PC-3 (cell line): ENCODE measurements at regions of chr7 and their contacts with region 1.

Region 1: DNA sequence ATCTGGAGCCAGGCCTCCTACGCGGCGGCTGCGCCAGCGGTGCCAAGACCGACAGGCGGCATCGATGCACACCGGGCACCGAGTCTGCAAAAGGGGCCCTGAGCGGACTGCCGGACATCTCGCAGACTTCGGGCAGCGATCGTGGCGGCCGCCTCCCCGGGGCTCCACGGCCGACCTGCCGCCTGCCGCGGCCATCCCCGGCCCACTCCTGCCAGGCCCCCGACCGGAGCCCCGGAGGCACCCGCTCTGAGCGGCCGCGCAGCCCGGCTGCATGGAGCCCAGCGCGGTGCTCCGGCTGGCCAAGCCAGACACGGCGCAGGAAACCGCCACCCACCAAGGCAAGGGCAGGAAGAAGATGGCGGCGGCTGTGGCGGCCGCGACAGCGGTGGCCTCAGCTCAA is 154.2 kb upstream of the KCTD7 start:
- DNase-seq: no peak
- ATAC-seq: no peak
- H3K4me3 ChIP-seq: no peak overlapping the region
- H3K27ac ChIP-seq: no peak overlapping the region
- H3K4me1 ChIP-seq: no peaks in the 10 kb centered on the region
- H3K27me3 ChIP-seq: no peaks in the 10 kb centered on the region
- CTCF ChIP-seq: no peak

Region 2: DNA sequence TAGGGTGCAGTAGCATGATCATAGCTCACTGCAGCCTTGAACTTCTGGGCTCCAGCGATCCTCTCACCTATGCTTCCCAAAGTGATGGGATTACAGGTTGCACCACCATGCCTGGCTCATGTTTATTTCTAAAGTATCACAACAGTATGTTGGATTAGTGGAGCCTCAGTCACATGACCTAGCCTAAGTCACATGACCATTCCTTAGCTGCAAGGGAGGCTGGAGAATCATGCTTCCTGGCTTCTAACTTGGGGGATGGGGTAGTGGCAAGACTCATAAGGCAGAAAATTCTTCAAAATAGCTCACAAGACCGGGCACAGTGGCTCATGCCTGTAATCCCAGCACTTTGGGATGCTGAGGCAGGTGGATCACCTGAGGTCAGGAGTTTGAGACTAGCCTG is 296.2 kb before region 1 on chr7:
- CTCF ChIA-PET with region 1: interaction called, 10 read pairs
- POLR2A ChIA-PET with region 1: no interaction called
- intact Hi-C with region 1: no loop called
- DNase-seq: no peak
- ATAC-seq: no peak
- H3K4me3 ChIP-seq: no peak overlapping the region
- H3K27ac ChIP-seq: no peak overlapping the region
- H3K4me1 ChIP-seq: no peaks in the 10 kb centered on the region
- H3K27me3 ChIP-seq: no peaks in the 10 kb centered on the region
- CTCF ChIP-seq: no peak

Region 3: DNA sequence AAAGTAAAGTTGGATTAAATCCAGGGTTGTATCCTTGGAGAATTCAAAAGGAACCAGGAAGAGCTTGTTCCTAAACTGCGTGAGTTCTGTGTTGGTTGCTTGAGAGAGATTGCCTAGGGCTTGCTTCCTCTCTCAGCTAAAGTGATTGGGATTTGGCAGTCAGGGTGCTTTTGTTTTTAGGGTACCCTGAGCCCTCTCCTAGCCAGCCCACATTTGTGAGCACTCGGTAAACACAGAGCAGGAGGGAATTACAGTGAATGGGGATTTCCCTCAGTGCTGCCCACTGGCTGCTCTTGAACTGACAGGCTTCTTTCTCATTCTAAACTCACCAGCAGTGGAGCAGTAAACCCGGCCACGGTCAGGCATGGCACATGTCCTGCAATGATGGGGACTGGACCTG is 122.4 kb before region 1 on chr7:
- CTCF ChIA-PET with region 1: no interaction called
- POLR2A ChIA-PET with region 1: no interaction called
- intact Hi-C with region 1: no loop called
- DNase-seq: no peak
- ATAC-seq: peak; percentile 27; the same call in 1 of the 2 replicates
- H3K4me3 ChIP-seq: no peak overlapping the region
- H3K27ac ChIP-seq: no peak overlapping the region
- H3K4me1 ChIP-seq: no peaks in the 10 kb centered on the region
- H3K27me3 ChIP-seq: no peaks in the 10 kb centered on the region
- CTCF ChIP-seq: no peak

Region 4: DNA sequence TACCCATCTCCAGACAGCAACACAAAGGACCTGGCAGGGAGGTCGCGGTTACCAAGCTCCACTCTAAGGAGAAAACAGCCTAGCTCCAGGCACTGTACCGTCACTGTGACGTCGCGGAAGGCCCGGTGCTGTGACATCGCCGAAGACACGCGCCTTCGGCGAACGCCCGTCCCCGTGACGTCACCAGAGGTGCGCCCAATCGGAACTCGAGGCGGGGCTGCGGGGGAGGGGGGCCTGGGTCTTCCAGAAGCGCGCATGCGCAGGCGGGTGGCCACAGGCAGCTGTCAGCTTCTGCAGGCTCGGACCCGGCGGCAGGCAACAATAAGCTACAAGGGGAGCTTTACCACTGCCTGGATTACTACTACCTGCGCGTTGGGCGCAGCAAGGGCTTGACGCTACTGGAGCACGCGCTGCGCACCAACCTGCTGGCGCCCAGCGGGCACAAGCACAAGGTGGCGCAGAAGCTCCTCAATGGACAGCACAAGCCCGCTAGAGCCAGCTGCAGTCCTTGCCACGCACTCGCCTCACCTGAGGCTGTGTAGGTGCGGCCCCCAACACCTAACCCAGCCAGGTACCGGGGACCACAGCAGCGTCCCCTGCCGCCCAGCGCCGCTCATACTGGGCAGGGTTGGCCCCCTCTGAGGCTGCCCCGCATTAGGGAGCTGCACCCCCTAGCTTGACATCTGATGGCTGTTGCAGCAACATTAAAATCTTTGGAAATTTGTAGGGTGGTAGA is 60.9 kb before region 1 on chr7:
- CTCF ChIA-PET with region 1: no interaction called
- POLR2A ChIA-PET with region 1: no interaction called
- intact Hi-C with region 1: no loop called
- DNase-seq: peak; percentile 67
- ATAC-seq: peak; percentile 92
- H3K4me3 ChIP-seq: peak overlapping the region; percentile 64
- H3K27ac ChIP-seq: no peak overlapping the region
- H3K4me1 ChIP-seq: 0 out of 2 replicates have a peak, but pooled peaks cover 4% of the 10 kb centered on the region
- H3K27me3 ChIP-seq: no peaks in the 10 kb centered on the region
- CTCF ChIP-seq: peak; percentile 57

Region 5: DNA sequence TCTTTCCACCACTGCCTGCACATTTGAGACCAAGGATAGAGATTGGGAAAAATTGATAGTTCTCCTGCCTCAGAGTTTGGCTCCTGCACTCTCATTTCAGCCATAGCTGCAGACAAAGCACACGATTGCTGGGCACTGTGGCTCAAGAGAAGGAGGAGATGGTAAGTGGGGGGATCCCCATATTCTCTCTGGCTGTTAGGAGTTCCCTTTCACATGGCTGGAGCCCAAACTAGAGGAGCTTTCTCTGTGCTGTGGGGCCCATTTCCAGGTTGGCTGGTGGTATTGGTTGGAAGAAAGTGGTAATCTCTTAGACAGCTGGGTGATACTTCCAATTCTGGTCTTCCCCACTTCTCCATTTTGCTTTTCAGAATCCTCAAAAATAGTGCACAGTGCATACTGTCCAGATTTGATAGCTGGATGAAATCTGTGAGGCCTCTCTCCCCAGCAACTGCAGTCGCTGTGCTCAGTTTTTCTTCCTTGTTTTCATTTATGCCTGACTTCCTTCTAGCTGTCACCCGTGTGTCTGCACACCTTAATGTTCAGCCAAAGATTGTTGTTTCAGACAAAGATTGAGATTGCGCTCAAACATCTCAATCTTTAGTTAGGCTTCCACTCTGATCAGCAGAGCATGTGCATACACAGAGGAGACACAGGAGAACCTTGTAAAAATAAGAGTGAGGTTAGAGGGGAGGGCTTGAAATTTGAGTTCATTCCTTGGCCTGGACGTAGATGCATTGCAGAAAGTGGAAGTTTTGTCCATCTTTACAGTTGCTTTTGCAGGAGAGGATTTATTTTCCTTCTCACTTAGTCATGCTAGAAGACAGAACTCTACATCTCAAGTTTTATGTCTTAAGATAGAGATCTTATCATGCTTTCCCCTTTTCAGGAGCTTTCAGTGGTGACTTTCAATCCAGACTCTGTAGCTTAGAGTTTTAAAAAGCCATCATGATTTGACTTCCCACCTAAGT is 294.7 kb after region 1 on chr7:
- CTCF ChIA-PET with region 1: no interaction called
- POLR2A ChIA-PET with region 1: no interaction called
- intact Hi-C with region 1: no loop called
- DNase-seq: no peak
- ATAC-seq: no peak
- H3K4me3 ChIP-seq: no peak overlapping the region
- H3K27ac ChIP-seq: no peak overlapping the region
- H3K4me1 ChIP-seq: peaks cover 10% of the 10 kb centered on the region
- H3K27me3 ChIP-seq: no peaks in the 10 kb centered on the region
- CTCF ChIP-seq: no peak